OCI-LY7 (cell line): ENCODE measurements at regions of chr16 and their contacts with region 1.

Region 1: DNA sequence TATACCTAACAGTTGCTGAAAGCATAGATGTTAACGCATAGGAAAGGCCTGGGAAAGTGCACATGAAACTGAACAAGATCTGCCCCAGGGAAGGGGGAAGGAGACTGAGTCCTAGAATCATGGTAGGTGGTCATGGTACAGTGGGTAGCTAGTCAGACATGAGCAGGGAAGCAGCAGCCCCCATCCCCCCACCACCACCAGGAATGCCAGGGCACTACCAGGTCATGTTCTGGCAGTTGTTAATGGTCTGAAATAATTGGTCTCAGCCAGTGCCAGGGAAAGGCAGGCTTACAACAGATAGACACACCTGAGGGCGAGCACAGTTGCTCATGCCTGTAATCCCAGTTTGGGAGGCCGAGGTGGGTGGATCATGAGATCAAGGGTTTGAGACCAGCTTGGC is 185.2 kb downstream of the CPPED1 start:
- DNase-seq: no peak
- H3K4me3 ChIP-seq: no peak overlapping the region
- H3K27ac ChIP-seq: no peak overlapping the region
- H3K4me1 ChIP-seq: peaks cover 30% of the 10 kb centered on the region
- CTCF ChIP-seq: no peak

Region 2: GRCh38 chr16:12340151-12340733 is 278.3 kb before region 1 on chr16:
- CTCF ChIA-PET with region 1: no interaction called
- POLR2A ChIA-PET with region 1: no interaction called
- intact Hi-C with region 1: loop called (anchors 5 kb)
- DNase-seq: peak; percentile 67
- H3K4me3 ChIP-seq: no peak overlapping the region
- H3K27ac ChIP-seq: no peak overlapping the region
- H3K4me1 ChIP-seq: peaks cover 61% of the 10 kb centered on the region
- CTCF ChIP-seq: peak; percentile 89

Region 3: GRCh38 chr16:12455287-12455798 is 163.2 kb before region 1 on chr16:
- CTCF ChIA-PET with region 1: no interaction called
- POLR2A ChIA-PET with region 1: interaction called, 4 read pairs
- intact Hi-C with region 1: loop called (anchors 2 kb)
- DNase-seq: peak; percentile 61
- H3K4me3 ChIP-seq: no peak overlapping the region
- H3K27ac ChIP-seq: no peak overlapping the region
- H3K4me1 ChIP-seq: peaks cover 14% of the 10 kb centered on the region
- CTCF ChIP-seq: peak; percentile 95

Region 4: DNA sequence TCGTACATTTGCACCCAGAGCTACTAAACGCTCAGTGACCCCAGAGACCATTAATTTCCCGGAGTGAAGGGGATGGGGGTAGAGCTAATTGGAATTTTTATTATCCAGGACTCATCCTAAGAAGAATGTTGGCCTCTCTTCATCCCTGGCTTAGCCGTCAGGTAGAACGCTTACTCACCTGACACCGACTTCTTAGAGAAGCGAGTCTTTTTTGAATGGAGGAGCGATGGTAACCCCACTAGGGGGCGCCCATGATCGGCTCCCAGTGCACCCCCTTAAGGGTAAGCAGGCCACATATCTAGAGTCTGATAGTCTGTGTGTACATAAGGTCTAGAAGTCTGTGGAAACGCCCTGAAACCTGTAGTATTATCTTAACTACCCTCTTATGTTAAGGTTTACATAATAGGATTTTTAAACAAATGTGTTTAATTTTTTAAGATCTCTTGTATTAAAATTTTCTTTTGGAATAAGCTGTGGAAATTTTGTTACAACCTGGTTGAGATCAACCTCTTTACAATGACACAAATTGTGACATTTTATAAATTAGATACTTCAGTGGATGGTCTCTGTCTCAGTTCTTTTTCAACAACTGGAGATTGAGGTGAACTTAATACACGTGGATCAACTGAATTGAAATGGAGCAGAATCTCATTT is 44.7 kb before region 1 on chr16:
- CTCF ChIA-PET with region 1: no interaction called
- POLR2A ChIA-PET with region 1: interaction called, 3 read pairs
- intact Hi-C with region 1: loop called (anchors 2 kb)
- DNase-seq: peak; percentile 66
- H3K4me3 ChIP-seq: no peak overlapping the region
- H3K27ac ChIP-seq: peak overlapping the region; percentile 51
- H3K4me1 ChIP-seq: peaks cover 59% of the 10 kb centered on the region
- CTCF ChIP-seq: peak; percentile 99

Region 5: GRCh38 chr16:13206606-13207005 is 588.1 kb after region 1 on chr16:
- CTCF ChIA-PET with region 1: no interaction called
- POLR2A ChIA-PET with region 1: no interaction called
- intact Hi-C with region 1: no loop called
- DNase-seq: no peak
- H3K4me3 ChIP-seq: no peak overlapping the region
- H3K27ac ChIP-seq: no peak overlapping the region
- H3K4me1 ChIP-seq: no peaks in the 10 kb centered on the region
- CTCF ChIP-seq: no peak